ENCODE measurements at regions of chr17 and their contacts with region 1.

Region 1: DNA sequence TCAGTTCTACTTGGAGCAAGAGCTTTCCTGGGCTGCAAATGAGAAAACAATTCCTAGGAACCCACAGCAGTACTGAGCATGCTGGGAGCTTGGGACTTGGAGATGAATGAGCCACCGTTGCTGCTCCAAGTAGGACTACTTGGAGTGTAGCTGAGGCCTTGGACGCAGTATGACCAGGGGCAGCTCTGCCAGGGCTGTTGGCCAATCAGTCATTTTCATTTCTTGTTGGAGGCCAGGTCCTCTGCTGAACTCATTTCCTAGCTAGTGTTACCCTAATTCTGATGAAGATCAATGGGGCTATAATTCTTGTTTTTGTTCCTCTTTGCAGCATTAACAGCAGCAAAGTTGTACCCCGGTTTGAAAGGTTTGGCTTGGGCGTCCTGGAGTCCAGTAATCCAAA is 8.0 kb upstream of the LGALS9 start:
- DNase-seq: no peak
- H3K4me3 ChIP-seq: no peak overlapping the region
- H3K27ac ChIP-seq: no peak overlapping the region
- H3K4me1 ChIP-seq: no peaks in the 10 kb centered on the region
- H3K27me3 ChIP-seq: no peaks in the 10 kb centered on the region
- CTCF ChIP-seq: no peak
- EP300 ChIP-seq: no peak
- RAD21 ChIP-seq: no peak

Region 2: GRCh38 chr17:27609611-27610303 is 13.2 kb before region 1 on chr17:
- CTCF ChIA-PET with region 1: interaction called, 115 read pairs
- POLR2A ChIA-PET with region 1: no interaction called
- DNase-seq: peak; percentile 61
- H3K4me3 ChIP-seq: no peak overlapping the region
- H3K27ac ChIP-seq: no peak overlapping the region
- H3K4me1 ChIP-seq: no peaks in the 10 kb centered on the region; a peak in 1 of 4 replicates
- H3K27me3 ChIP-seq: no peaks in the 10 kb centered on the region
- CTCF ChIP-seq: peak; percentile 49
- EP300 ChIP-seq: no peak
- RAD21 ChIP-seq: peak; percentile 63